Panc1 (cell line): ENCODE measurements at regions of chr12 and their contacts with region 1.

Region 1: DNA sequence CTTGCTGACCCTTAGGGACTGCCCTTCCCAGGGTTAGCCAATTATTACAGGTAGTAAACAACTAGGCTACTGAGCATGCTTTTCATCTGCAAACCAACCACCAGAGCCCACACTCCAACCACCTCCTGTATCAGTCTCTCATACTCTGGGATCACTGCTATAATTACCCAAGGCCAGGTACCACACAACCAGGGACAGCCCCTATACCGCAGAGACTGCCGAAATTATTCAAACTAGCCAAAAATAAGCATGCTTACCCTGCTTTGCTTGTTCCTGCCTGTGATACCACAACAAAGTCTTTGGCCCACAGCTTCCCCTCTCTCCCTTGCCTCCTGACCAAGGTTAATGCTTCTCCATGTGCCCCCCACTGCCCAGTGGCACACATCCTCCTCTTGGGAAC is 197.6 kb upstream of the SRRM4 start:
- DNase-seq: no peak
- ATAC-seq: no peak
- H3K4me3 ChIP-seq: no peak overlapping the region
- H3K27ac ChIP-seq: no peak overlapping the region
- H3K4me1 ChIP-seq: no peaks in the 10 kb centered on the region
- H3K27me3 ChIP-seq: no peaks in the 10 kb centered on the region
- CTCF ChIP-seq: no peak

Region 2: DNA sequence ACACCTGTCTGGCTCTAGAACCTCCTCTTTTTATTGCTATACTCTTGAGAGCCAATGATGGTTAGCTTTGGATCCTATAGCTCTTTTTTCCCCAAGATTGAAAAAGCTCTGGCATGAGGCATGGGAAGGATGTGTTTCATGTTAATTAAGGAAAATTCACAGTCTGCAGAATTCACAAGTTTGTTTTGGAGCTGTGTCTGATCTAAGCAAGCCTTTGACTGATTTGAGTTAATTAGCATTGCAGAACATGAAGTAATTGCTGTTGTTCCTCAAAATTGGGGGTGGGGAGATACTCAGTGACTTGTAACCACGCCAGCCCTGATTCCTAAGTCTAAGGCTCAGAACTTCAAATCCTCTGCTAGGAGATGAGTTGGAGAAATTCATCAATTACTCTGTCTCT is 202.3 kb before region 1 on chr12:
- CTCF ChIA-PET with region 1: no interaction called
- POLR2A ChIA-PET with region 1: no interaction called
- in situ Hi-C with region 1: no loop called
- intact Hi-C with region 1: no loop called
- DNase-seq: no peak
- ATAC-seq: no peak
- H3K4me3 ChIP-seq: no peak overlapping the region
- H3K27ac ChIP-seq: no peak overlapping the region
- H3K4me1 ChIP-seq: no peaks in the 10 kb centered on the region
- H3K27me3 ChIP-seq: 0 out of 2 replicates have a peak, but pooled peaks cover 2% of the 10 kb centered on the region
- CTCF ChIP-seq: no peak

Region 3: DNA sequence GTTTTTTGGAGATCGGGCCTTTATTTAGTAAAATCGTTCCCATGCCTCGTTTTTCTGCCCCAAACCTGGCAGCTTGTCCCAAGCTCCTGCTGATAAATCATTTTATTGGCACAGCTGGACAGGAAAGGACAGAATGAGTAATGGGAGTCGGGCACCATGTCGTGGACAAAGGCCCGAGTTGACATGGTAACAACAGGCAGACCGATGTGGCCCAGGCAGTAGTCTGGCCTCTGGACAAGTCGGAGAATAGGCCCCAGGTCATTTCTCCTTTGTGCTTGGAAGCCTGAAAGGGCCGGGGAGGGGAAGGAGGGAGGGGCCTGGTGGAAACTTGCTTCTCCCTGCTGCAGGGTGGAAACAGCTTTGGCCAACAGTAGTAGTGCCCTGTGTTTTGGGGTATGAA is 172.4 kb before region 1 on chr12:
- CTCF ChIA-PET with region 1: interaction called, 10 read pairs
- POLR2A ChIA-PET with region 1: no interaction called
- in situ Hi-C with region 1: no loop called
- intact Hi-C with region 1: no loop called
- DNase-seq: no peak
- ATAC-seq: no peak
- H3K4me3 ChIP-seq: no peak overlapping the region
- H3K27ac ChIP-seq: no peak overlapping the region
- H3K4me1 ChIP-seq: no peaks in the 10 kb centered on the region
- H3K27me3 ChIP-seq: no peaks in the 10 kb centered on the region
- CTCF ChIP-seq: no peak